ENCODE measurements at regions of chr18 and their contacts with region 1.

Region 1: GRCh38 chr18:59899298-59900221 is at the start of gene PMAIP1:
- DNase-seq: peak; percentile 93
- CTCF ChIP-seq: no peak

Region 2: DNA sequence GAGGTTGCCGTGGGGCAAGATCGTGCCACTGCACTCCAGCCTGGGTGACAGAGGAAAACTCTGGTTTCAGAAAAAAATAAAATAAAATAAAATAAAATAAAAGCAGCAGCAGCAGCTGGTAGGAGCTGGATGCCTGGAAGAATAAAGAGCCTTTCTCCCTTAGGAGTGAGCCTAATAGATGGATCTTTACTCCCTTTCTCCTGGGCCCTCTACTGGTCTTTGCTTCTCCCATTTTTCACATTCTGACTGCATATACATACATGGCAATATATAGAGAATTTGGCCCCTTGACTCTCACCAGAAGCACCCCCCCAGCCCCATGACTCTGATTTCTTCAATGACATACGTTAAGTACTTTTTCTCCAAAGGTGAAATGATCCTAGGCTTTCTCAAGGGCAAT is 1238.1 kb before region 1 on chr18:
- CTCF ChIA-PET with region 1: no interaction called
- POLR2A ChIA-PET with region 1: interaction called, 11 read pairs
- DNase-seq: no peak
- CTCF ChIP-seq: no peak

Region 3: GRCh38 chr18:59846814-59847490 is 52.6 kb before region 1 on chr18:
- CTCF ChIA-PET with region 1: no interaction called
- POLR2A ChIA-PET with region 1: interaction called, 11 read pairs
- DNase-seq: peak; percentile 86
- CTCF ChIP-seq: no peak

Region 4: DNA sequence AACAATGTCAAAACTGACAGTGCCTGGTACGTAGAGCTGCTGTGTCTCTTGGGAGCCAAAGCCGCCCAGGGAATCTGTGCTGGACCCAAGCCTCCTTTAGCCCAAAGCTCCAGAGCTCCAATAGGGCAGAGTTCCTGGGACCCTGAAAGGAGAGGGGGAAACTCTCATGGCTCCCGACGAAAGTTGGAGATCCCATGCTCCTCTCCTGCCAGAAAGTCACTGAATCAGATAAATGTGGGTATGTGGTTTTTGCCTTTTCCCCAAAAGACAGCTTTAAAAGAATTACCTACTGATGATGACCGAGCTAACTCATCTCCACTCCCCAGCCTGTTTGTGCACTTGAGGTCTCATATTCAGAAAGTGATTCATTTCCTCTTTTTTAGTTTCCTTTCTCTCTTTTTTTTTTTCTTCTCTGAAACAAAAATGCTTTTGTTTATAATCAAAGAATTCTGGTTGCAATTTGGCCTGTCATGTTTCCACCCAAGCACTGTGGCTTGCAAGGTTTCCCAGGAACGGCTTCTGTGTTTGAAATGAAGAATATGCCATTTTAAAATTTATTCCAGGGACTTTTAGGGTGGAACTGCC is 13.9 kb before region 1 on chr18:
- CTCF ChIA-PET with region 1: interaction called, 7 read pairs
- POLR2A ChIA-PET with region 1: interaction called, 36 read pairs
- DNase-seq: peak; percentile 66
- CTCF ChIP-seq: no peak

Region 5: GRCh38 chr18:59927246-59927825 is 27.8 kb after region 1 on chr18:
- CTCF ChIA-PET with region 1: interaction called, 7 read pairs
- POLR2A ChIA-PET with region 1: interaction called, 47 read pairs
- DNase-seq: peak; percentile 69
- CTCF ChIP-seq: no peak

Measured in GM10248 (cell line).